MCF 10A (cell line): ENCODE measurements at regions of chr9 and their contacts with region 1.

Region 1: DNA sequence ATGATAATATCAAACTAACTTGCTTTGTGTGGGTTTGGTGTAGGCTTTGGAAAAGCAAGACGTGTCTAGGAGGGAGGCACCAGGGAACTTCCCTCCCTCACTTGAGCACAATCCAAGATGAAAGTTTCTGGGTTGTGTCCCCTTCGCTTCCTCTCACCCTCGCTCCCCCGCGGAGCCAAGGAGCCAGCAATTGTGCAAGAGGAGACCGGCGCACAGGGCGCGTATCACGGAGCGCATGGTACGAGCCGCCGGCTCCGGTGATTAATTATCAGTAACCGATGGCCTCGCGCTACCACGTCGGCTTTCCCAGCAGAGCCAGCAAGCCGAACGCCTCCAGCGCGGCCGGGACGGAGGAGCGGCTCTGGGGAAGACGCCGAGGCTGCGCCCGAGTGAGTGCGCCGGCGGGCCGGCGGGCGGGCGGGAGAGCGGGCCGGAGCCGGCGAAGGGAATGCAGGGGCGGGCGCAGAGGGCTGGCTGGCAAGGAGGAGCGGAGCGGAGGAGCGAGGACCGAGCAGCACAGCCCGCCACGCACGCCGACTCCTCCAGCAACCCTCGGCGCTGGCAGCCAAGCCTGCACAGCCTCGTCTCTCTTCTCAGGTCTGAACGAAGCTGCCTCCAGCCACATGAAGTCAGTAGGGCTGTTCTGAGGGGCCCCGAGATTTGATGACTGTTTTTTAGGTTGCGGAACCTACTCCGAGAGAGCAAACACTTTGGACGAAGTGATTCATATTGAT is 143.6 kb downstream of the BNC2 start:
- DNase-seq: peak; percentile 85
- H3K4me3 Mint-ChIP-seq: peak overlapping the region; percentile 78
- H3K27ac Mint-ChIP-seq: no peak overlapping the region
- H3K4me1 Mint-ChIP-seq: peaks cover 5% of the 10 kb centered on the region
- H3K27me3 Mint-ChIP-seq: peaks cover 21% of the 10 kb centered on the region
- CTCF ChIP-seq: no peak

Region 2: DNA sequence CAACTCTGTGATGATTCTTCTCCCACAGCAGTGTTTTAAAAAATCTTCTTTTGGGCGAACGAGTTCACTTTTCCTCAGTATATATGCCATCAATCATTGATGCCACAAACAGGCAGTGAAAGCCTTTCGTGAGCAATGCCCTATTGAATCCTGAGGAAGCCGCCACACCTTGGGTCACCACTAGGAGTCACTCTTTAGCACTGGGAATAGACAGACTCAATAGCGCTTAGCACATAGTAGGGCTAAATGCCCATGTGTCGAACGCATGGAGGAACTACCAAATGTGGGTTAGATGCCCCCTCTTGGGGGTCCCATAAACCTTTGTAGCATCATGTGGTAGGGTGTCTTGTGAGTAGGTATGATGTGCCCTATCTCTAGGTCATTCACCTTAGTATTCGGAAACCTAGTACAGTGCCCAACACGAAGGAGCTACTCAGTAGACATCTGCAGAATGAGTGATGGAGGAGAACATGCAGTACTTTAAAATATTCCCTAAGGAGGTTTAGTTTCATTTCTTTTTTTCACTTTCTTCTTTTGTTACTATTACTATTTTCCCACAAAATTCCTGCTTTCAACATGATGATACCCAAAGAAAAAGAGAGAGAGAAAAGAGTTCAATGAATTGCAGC is 460.1 kb before region 1 on chr9:
- CTCF ChIA-PET with region 1: no interaction called
- POLR2A ChIA-PET with region 1: interaction called, 3 read pairs
- intact Hi-C with region 1: loop called (anchors 1 kb)
- DNase-seq: peak; percentile 34
- H3K4me3 Mint-ChIP-seq: no peak overlapping the region
- H3K27ac Mint-ChIP-seq: no peak overlapping the region
- H3K4me1 Mint-ChIP-seq: peaks cover 11% of the 10 kb centered on the region
- H3K27me3 Mint-ChIP-seq: peaks cover 12% of the 10 kb centered on the region
- CTCF ChIP-seq: peak; percentile 48

Region 3: DNA sequence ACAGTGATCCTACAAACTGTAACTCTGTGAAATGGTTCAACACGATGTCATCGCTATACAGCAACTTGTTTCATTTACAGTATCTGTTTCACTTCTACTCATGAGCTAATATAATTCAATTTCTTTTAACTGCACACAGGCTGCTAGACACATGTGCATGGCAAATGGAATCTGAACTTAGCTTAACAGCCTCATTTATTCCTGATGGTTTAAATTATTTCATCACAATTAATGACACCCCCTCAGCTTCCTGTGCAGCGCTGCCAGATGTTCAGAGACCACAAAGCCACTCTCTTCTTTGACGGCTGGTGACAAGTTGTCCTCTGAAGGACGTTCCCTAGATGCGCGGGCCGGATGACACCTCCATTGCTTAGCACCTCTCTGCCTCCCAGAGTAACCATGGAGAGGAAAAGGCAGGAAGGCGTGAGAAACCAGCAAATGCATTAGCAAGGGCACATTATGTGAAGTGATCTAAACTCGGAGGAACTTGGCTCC is 47.5 kb before region 1 on chr9:
- CTCF ChIA-PET with region 1: no interaction called
- POLR2A ChIA-PET with region 1: no interaction called
- intact Hi-C with region 1: no loop called
- DNase-seq: no peak
- H3K4me3 Mint-ChIP-seq: no peak overlapping the region
- H3K27ac Mint-ChIP-seq: no peak overlapping the region
- H3K4me1 Mint-ChIP-seq: no peaks in the 10 kb centered on the region
- H3K27me3 Mint-ChIP-seq: peaks cover 45% of the 10 kb centered on the region
- CTCF ChIP-seq: no peak